ENCODE measurements at regions of chr19 and their contacts with region 1.

Region 1: DNA sequence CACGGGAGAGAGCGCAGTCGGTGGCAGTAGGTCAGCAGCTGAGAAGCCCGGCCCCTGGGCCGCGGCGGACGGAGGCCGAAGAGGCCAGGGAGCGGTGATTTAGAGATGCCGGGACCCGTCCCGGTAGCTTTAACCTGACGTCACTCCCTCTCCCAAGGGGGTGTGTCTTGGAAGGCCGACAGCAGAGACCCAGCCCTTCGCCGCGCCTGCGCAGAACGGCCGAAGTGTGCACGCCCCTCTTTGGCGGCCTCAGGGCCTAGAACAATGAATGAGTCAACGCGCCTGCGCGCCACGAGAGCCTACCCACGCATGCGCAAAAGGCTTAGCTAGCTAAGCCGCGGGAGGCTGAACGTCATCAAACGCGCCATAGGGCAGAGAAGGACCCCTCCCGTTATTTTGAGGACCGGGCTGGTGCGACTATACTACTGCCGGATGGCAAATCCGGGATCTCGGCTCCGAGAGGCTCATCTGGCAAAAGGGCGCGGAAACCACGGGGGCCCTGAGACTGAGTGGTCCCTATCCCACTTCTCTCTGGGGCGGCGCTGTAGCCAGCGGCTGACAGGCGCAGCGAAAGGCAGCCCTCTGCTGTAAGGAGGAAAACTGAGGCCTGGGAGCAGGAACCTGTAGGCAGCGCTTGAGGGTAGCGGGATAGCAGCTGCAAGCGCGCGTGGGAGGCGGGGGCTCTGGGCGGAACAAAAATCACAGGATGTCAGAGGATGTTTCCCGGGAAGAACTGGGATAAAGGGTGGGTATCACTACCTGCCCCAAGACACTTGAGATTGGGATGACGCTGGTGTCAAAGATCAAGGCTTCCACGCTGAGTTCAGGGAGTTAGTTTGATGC is at the starts of genes IRGQ and ZNF576:
- DNase-seq: peak; percentile 100
- ATAC-seq: peak; percentile 84
- H3K4me3 Mint-ChIP-seq: peak within 1 kb of the TSS; percentile 86
- H3K27ac Mint-ChIP-seq: peak within 1 kb of the TSS; percentile 98
- H3K4me1 Mint-ChIP-seq: peaks cover 26% of the 10 kb centered on the region
- H3K27me3 Mint-ChIP-seq: no peaks in the 10 kb centered on the region
- CTCF ChIP-seq: no peak
- total RNA-seq, gene IRGQ: 17.1 to 17.9 TPM
- total RNA-seq, gene ZNF576: 8.8 to 12.2 TPM

Region 2: DNA sequence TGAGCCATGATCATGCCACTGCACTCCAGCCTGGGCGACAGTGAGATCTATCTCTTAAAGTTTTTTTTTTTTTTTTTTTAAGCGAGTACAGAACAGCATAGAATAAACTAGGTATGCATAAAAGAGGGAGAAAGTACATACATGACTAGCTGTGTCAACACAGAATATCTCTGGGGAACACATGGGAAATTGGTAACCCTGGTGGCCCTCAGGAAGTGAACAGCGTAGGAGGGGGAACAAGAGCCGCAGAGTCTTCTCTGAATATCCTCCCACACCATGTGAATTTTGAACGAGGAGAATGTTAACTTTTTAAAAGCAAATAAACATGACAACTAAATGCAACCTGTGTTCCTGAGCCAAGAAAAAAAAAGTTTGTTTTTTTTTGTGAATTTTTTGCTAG is 106.9 kb before region 1 on chr19:
- CTCF ChIA-PET with region 1: no interaction called
- POLR2A ChIA-PET with region 1: no interaction called
- intact Hi-C with region 1: no loop called
- DNase-seq: no peak
- ATAC-seq: no peak
- H3K4me3 Mint-ChIP-seq: no peak overlapping the region
- H3K27ac Mint-ChIP-seq: peak overlapping the region; percentile 55
- H3K4me1 Mint-ChIP-seq: peaks cover 6% of the 10 kb centered on the region
- H3K27me3 Mint-ChIP-seq: no peaks in the 10 kb centered on the region
- CTCF ChIP-seq: no peak

Region 3: GRCh38 chr19:43519436-43520088 is 76.7 kb before region 1 on chr19:
- CTCF ChIA-PET with region 1: interaction called, 23 read pairs
- POLR2A ChIA-PET with region 1: interaction called, 4 read pairs
- intact Hi-C with region 1: no loop called
- DNase-seq: peak; percentile 85
- ATAC-seq: peak; percentile 91
- H3K4me3 Mint-ChIP-seq: no peak overlapping the region
- H3K27ac Mint-ChIP-seq: no peak overlapping the region
- H3K4me1 Mint-ChIP-seq: peaks cover 17% of the 10 kb centered on the region
- H3K27me3 Mint-ChIP-seq: no peaks in the 10 kb centered on the region
- CTCF ChIP-seq: peak; percentile 95

Region 4: GRCh38 chr19:43532962-43533545 is 63.2 kb before region 1 on chr19 and contains the start of gene ZNF575:
- CTCF ChIA-PET with region 1: interaction called, 75 read pairs
- POLR2A ChIA-PET with region 1: interaction called, 6 read pairs
- intact Hi-C with region 1: loop called (anchors 10 kb)
- DNase-seq: peak; percentile 95
- ATAC-seq: peak; percentile 56
- H3K4me3 Mint-ChIP-seq: peak within 1 kb of the TSS; percentile 82
- H3K27ac Mint-ChIP-seq: peak within 1 kb of the TSS; percentile 94
- H3K4me1 Mint-ChIP-seq: peaks cover 16% of the 10 kb centered on the region
- H3K27me3 Mint-ChIP-seq: no peaks in the 10 kb centered on the region
- CTCF ChIP-seq: no peak
- total RNA-seq, gene ZNF575: 1.2 to 2.0 TPM

Region 5: GRCh38 chr19:43562698-43563241 is 33.5 kb before region 1 on chr19:
- CTCF ChIA-PET with region 1: interaction called, 188 read pairs
- POLR2A ChIA-PET with region 1: interaction called, 24 read pairs
- intact Hi-C with region 1: loop called (anchors 5 kb)
- DNase-seq: peak; percentile 88
- ATAC-seq: peak; percentile 90
- H3K4me3 Mint-ChIP-seq: peak overlapping the region; percentile 50
- H3K27ac Mint-ChIP-seq: peak overlapping the region; percentile 97
- H3K4me1 Mint-ChIP-seq: peaks cover 52% of the 10 kb centered on the region
- H3K27me3 Mint-ChIP-seq: no peaks in the 10 kb centered on the region
- CTCF ChIP-seq: no peak

Region 6: GRCh38 chr19:43575156-43575950 is 20.9 kb before region 1 on chr19 and contains the starts of genes PINLYP and XRCC1:
- CTCF ChIA-PET with region 1: interaction called, 62 read pairs
- POLR2A ChIA-PET with region 1: interaction called, 20 read pairs
- intact Hi-C with region 1: no loop called
- DNase-seq: peak; percentile 99
- ATAC-seq: peak; percentile 99
- H3K4me3 Mint-ChIP-seq: peak within 1 kb of the TSS; percentile 96
- H3K27ac Mint-ChIP-seq: peak within 1 kb of the TSS; percentile 94
- H3K4me1 Mint-ChIP-seq: peaks cover 37% of the 10 kb centered on the region
- H3K27me3 Mint-ChIP-seq: no peaks in the 10 kb centered on the region
- CTCF ChIP-seq: no peak
- total RNA-seq, gene PINLYP: 9.7 to 12.3 TPM
- total RNA-seq, gene XRCC1: 29.4 to 32.4 TPM

Region 7: DNA sequence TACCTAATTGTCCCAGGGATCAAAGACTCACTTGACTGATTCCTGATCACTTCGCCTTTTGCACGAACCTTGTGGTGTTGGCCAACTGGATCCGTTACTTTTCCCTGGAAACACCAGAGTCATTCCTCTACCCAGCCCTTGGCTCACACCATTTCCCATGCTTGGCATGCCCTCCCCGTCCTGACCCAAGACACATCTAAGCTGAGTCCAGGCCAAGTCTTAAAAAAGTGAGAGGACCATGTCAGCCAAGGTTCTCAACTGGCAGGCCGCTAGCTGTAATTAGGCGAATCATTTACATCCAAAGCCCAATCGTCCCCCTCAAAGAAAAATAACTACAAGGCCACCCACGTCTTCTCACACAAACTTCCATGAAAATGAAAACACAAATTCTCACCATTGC is 62.3 kb after region 1 on chr19:
- CTCF ChIA-PET with region 1: no interaction called
- POLR2A ChIA-PET with region 1: no interaction called
- intact Hi-C with region 1: no loop called
- DNase-seq: no peak
- ATAC-seq: no peak
- H3K4me3 Mint-ChIP-seq: no peak overlapping the region
- H3K27ac Mint-ChIP-seq: no peak overlapping the region
- H3K4me1 Mint-ChIP-seq: no peaks in the 10 kb centered on the region
- H3K27me3 Mint-ChIP-seq: no peaks in the 10 kb centered on the region
- CTCF ChIP-seq: no peak

Region 8: GRCh38 chr19:43668406-43669158 is 72.4 kb after region 1 on chr19:
- CTCF ChIA-PET with region 1: interaction called, 14 read pairs
- POLR2A ChIA-PET with region 1: no interaction called
- intact Hi-C with region 1: no loop called
- DNase-seq: peak; percentile 99
- ATAC-seq: peak; percentile 90
- H3K4me3 Mint-ChIP-seq: peak overlapping the region; percentile 85
- H3K27ac Mint-ChIP-seq: peak overlapping the region; percentile 71
- H3K4me1 Mint-ChIP-seq: peaks cover 38% of the 10 kb centered on the region
- H3K27me3 Mint-ChIP-seq: no peaks in the 10 kb centered on the region
- CTCF ChIP-seq: no peak

Region 9: GRCh38 chr19:43723588-43723987 is 127.4 kb after region 1 on chr19:
- CTCF ChIA-PET with region 1: no interaction called
- POLR2A ChIA-PET with region 1: no interaction called
- intact Hi-C with region 1: no loop called
- DNase-seq: no peak
- ATAC-seq: no peak
- H3K4me3 Mint-ChIP-seq: no peak overlapping the region
- H3K27ac Mint-ChIP-seq: no peak overlapping the region
- H3K4me1 Mint-ChIP-seq: peaks cover 4% of the 10 kb centered on the region
- H3K27me3 Mint-ChIP-seq: no peaks in the 10 kb centered on the region
- CTCF ChIP-seq: no peak

Measured in activated CD8-positive, alpha-beta T cell treated with anti-CD3 and anti-CD28 coated beads for 36 hours (primary cell).